Colonic mucosa (tissue), 4 donors: ENCODE measurements at regions of chr6 and their contacts with region 1.

Region 1: DNA sequence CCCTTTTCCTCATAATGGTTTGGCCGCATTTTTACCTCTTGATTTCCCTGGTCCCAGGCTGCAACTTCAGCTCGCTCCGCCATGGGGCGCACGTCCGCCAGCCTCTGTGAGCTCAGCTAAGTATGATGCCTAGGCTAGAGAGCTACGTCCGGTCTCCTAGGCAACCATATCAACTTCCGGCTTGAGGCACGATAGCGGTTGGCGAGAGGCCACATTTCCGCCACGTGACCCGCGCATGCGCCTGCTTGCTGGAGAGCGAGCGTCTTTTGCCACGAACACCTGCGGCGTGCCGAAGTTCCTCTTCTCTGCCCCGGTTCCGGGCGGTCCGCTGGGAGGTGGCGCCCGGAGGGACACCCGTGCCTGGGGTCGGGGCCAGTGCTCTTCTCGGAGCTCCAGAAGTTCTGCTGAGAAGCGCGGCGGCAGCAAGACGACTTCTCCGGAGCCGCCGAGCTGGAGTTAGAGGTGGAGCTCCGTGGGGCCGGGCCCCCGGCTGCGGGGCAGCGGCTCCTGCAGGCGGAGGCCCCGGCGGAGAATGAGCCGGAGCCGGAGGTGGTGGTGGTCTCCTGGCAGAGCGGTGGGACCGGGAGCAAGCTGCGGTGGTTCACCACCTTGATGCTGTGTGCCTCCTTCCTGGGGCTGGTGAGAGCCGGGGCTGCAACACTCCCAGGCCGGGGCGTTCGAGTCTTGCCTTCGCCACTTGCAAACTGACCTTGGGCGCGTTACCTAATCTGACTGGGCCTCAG is 172.0 kb downstream of the SLC16A10 start:
- DNase-seq: peak; percentile 99
- H3K4me3 ChIP-seq: peak overlapping the region; percentile 72
- H3K27ac ChIP-seq: peak overlapping the region; percentile 79
- H3K4me1 ChIP-seq: peaks cover 8% of the 10 kb centered on the region
- H3K27me3 ChIP-seq: no peaks in the 10 kb centered on the region
- CTCF ChIP-seq: peak; percentile 97

Region 2: GRCh38 chr6:112043032-112044007 is 784.1 kb after region 1 on chr6:
- intact Hi-C with region 1: loop called (anchors 5 kb)
- DNase-seq: peak; percentile 94
- H3K4me3 ChIP-seq: peak overlapping the region; percentile 44
- H3K27ac ChIP-seq: peak overlapping the region; percentile 66
- H3K4me1 ChIP-seq: no peaks in the 10 kb centered on the region
- H3K27me3 ChIP-seq: no peaks in the 10 kb centered on the region
- CTCF ChIP-seq: peak; percentile 98